ENCODE measurements at regions of chr7 and their contacts with region 1.

Region 1: DNA sequence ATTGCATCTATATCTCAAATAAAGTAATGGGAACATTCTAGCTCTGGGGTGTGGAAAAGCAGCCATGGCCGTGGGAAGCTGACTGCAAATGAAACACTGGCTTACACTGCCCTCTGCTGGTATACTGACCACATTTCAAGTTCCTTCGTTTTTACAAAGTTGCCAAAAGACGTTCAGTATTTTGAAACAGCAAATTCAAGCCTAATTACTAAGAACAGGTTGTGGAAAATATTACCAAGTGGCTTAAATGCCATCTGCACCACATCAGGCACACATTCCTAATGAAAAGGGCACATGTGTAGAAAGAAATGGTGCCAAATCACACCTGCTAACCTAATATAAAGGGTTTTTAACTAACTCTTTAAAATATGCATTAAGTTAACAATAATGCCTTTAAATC is 83.9 kb downstream of the JAZF1 start:
- DNase-seq: peak in 6 of 9 experiments; percentile 11 to 73 (median 46)
- ATAC-seq: peak; percentile 55
- H3K4me3 ChIP-seq: no peak overlapping the region
- H3K4me3 Mint-ChIP-seq: no peak overlapping the region
- H3K27ac ChIP-seq: no peak overlapping the region
- H3K27ac Mint-ChIP-seq: no peak overlapping the region
- H3K4me1 ChIP-seq: no peaks in the 10 kb centered on the region
- H3K4me1 Mint-ChIP-seq: peaks cover 4% of the 10 kb centered on the region
- H3K27me3 ChIP-seq: no peaks in the 10 kb centered on the region
- H3K27me3 Mint-ChIP-seq: no peaks in the 10 kb centered on the region
- CTCF ChIP-seq: peak; percentile 96

Region 2: GRCh38 chr7:28078036-28078901 is 18.4 kb before region 1 on chr7:
- CTCF ChIA-PET with region 1: interaction called, 15 read pairs
- POLR2A ChIA-PET with region 1: no interaction called
- intact Hi-C with region 1: no loop called
- DNase-seq: peak in 8 of 9 experiments; percentile 20 to 67 (median 48)
- ATAC-seq: peak; percentile 69
- H3K4me3 ChIP-seq: no peak overlapping the region
- H3K4me3 Mint-ChIP-seq: no peak overlapping the region
- H3K27ac ChIP-seq: no peak overlapping the region
- H3K27ac Mint-ChIP-seq: no peak overlapping the region
- H3K4me1 ChIP-seq: no peaks in the 10 kb centered on the region
- H3K4me1 Mint-ChIP-seq: peaks cover 2% of the 10 kb centered on the region
- H3K27me3 ChIP-seq: no peaks in the 10 kb centered on the region
- H3K27me3 Mint-ChIP-seq: peaks cover 3% of the 10 kb centered on the region
- CTCF ChIP-seq: peak; percentile 99

Region 3: DNA sequence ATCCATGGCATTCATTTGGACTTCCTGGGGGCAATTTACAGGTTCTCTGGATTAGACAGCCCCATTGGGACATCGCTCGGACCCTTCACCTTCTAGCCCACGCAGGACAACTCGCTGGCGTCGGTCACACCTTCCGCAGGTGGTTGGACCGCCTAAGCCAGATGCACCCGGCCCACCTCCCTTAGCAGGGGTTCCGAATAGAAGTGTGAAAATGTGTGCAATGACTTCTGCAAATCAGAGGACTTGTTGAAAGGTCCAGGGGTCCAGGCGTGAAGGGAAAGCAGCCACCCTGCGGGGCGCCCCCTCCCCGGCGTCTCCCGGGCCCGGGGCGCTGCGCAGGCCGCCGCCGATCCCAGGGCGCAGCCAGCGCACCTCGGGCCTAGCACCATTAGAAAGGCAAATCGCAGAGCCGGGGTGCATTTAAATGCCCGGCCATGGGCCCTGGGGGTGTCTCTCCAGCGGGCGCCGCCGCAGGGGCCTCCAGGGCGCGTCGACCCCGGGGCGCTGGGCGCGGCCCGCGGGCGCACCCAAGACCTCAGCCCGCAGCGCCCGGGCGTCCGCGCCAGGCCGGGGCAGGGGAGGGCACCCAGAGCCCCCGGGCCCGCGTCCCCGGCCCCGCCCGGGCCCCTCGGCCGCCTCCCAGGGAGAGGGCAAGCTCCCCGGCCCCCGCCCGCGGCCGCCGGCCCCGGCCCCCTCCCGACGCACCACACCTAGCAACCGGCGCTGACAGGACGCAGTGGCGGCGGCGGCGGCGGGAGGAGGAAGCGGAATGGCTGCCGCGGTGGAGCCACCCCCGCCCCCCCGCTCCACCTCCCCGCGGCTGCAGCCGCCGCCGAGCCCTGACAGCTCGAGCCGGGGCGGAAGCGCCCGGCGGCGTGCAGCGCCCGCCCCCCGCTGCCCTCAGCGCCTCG is 82.7 kb after region 1 on chr7:
- CTCF ChIA-PET with region 1: no interaction called
- POLR2A ChIA-PET with region 1: no interaction called
- intact Hi-C with region 1: loop called in 1 of 2 experiments (anchors 5 kb)
- DNase-seq: peak; percentile 45 to 88 (median 74)
- ATAC-seq: peak; percentile 70
- H3K4me3 ChIP-seq: peak overlapping the region; percentile 27 to 38
- H3K4me3 Mint-ChIP-seq: peak overlapping the region; percentile 82
- H3K27ac ChIP-seq: peak overlapping the region; percentile 12 to 21
- H3K27ac Mint-ChIP-seq: peak overlapping the region; percentile 60
- H3K4me1 ChIP-seq: peaks cover 7% of the 10 kb centered on the region
- H3K4me1 Mint-ChIP-seq: peaks cover 15% of the 10 kb centered on the region
- H3K27me3 ChIP-seq: no peaks in the 10 kb centered on the region
- H3K27me3 Mint-ChIP-seq: no peaks in the 10 kb centered on the region
- CTCF ChIP-seq: no peak